Head of caudate nucleus (tissue), 42 donors: ENCODE measurements at regions of chr12 and their contacts with region 1.

Region 1: GRCh38 chr12:27635349-27635972 is 60.8 kb upstream of the REP15 start:
- DNase-seq: peak in 11 of 42 donors; percentile 6 to 57 (median 25)

Region 2: DNA sequence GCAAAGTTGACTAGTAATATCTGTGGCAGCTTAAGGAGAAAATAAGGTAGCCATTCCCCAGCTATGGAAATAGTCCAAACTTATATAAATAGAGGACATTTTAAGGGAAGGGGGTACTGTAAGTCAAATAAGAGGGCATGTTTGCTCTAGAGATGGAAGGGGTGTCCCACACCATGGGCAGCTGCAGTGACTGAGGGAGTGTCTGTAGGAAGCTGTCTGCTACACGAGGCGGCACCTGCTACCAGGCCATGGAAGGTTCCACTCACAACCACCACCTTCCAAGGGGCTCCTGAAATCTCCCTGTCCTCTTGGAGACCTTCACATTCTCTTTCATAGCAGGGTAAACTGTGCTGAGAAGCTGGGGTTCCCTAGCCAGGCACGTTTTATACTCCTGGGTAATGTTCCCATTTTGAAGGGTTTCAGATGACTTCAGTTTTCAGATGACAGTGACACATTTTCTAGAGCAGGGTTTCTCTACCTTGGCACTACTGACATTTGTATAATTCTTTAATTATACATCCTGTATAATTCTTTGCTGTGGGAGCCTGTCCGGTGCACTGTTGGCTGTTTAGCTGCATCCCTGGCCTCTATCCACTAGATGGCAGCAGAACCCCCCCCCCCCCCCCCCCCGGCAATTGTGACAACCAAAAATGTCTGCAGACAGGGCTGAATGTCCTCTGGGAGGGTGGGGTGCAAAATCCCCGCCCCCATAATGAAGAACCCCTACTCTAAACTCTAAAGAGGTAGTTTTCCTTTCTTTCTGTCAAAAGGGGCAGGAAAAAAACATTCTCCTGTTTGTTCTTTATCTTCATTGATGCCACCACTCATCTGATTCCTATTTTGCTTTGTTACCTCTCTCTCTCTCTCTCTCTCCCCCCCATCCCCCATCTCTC is 200.5 kb before region 1 on chr12:
- intact Hi-C with region 1: loop called (anchors 10 kb)
- DNase-seq: peak in 16 of 42 donors; percentile 3 to 63 (median 24)

Region 3: DNA sequence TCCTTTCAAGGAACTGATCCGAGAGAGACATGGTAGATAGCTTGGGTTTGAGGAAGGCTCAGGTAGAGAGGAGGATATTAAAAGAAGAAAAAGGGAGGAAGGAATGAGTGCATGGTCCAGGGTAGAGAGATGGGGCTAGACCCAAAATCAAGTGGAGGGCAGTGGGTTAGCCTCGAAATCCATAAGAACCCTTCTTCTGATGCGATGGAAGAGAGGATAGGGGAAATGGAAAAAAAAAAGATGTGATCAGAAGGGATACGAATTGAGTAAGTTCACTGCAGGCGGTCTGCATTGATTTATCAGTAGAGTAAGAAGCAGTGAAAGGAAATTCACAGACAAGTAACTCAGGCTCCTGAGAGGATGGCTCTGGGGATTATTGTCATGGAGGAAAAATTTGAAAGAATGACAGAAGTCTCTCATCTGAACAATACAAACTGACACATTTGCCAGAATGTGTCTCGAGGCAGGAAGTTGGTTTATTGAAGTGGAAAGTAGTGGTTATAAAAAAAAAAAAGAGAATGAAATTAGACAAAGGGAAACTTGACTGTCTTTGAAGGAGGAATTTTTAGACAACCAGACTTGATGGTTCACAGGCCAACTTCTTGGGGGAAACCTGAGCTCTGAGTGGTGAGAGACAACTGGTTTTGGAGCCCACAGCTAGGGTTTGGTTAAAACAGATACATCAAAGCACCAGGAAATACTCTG is 101.2 kb before region 1 on chr12:
- intact Hi-C with region 1: loop called (anchors 5 kb)
- DNase-seq: no peak

Region 4: DNA sequence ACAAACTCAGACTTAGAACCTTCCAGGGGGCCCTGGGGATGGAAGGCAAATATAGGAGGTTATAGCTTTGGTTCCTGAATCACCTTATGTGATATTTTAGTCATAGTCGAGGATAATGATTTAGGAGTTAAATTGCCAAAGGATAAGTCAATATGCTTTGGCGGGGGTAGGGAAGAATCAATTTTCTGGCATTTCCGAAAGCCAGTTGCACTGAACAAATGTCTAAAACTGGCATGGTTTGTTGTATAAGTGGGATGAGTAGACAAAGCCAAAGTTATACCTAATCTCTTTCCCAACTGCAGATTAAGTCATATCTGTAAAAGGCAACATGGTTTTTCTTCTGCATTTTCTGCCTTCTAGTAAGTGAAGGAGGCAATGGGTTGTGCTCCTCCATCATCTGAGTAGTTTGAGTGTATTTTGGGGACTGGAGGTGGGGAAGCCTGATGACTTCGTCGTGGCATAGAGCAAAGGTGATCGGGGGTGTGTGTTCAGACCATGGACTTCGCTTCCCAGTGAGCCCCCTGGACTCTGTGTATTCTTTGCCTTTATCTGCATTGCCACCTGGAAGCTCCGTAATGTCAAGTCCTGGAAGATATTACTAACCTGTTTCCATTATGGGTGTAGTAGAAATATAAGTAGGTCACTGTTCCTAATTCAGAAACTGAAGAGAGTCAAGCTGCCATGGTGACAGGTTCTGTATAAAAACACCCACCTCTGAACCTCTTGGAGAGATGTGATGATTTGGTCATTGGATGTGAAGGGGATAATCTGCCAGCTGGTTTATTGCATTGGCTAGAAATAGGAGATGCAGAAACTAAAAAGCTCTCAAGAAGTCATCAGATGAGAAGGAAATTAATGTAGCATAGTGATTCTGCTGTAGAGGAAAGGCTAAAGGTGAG is 86.9 kb before region 1 on chr12:
- intact Hi-C with region 1: no loop called
- DNase-seq: peak in 1 of 42 donors; percentile 38

Region 5: DNA sequence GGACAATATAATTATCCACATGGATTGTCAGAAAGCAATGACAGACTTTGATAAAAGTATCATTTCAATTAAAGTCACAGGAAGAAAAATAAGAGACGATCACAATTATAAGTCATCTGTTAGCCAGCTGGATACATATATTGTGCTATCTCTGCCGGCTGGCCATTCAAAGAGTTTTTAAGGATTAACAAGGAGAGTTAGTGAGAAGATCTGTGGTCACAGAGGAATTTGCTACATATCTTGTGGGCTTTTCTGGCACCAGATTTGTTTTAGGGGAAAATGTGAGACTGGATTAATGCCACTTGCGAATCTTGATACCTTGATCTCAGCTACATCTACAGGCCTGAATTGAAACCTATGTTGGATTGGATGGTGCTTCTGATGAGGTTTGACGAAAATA is 235.5 kb after region 1 on chr12:
- intact Hi-C with region 1: no loop called
- DNase-seq: no peak